GM12878 (cell line): ENCODE measurements at regions of chr17 and their contacts with region 1.

Region 1: DNA sequence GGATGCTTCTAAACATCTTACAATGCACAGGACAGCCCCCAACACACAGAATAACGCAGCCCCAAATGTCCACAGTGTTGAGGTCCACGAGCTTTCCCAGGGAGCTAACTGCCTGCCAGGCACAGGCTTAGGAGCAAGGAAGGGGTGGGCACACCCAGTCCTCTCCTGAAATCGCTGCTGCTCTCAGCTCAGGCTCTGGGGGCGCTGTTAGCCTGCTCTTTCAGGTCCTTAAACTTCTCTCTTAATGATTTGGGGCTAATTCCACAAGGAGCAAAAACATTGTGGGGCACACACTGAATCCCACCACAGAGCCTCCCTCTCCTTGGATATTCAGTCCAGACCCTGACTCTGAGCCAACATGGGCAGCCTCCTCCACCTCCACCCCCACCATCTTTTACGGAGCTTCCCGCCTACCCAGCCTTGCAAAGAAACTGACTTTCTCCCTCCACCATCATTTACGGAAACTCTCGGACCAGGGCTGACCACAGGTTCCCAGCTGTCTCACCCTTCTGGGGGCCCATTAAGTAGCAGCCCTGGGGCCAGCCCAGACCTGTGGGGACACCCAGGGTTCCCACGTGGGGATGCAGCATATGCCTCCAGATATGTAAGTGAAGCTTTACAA is 1.1 kb downstream of the CD300H start:
- DNase-seq: no peak
- ATAC-seq: peak; percentile 86
- H3K4me3 ChIP-seq: no peak overlapping the region
- H3K27ac ChIP-seq: no peak overlapping the region
- H3K4me1 ChIP-seq: no peaks in the 10 kb centered on the region
- H3K27me3 ChIP-seq: peaks cover 1 to 3% of the 10 kb centered on the region in 2 experiments; a peak in 3 of 4 replicates
- CTCF ChIP-seq: peak; percentile 66 to 78 (median 74)
- EP300 ChIP-seq: no peak
- POLR2A ChIP-seq: no peak
- RAD21 ChIP-seq: peak; percentile 71

Region 2: GRCh38 chr17:74513987-74514631 is 52.1 kb before region 1 on chr17:
- CTCF ChIA-PET with region 1: interaction called, 3 read pairs
- POLR2A ChIA-PET with region 1: no interaction called
- RAD21 ChIA-PET with region 1: no interaction called
- SMC1A ChIA-PET with region 1: no interaction called
- in situ Hi-C with region 1: loop called (anchors 10 kb)
- intact Hi-C with region 1: no loop called
- DNase-seq: peak; percentile 73
- ATAC-seq: no peak
- H3K4me3 ChIP-seq: no peak overlapping the region
- H3K27ac ChIP-seq: no peak overlapping the region
- H3K4me1 ChIP-seq: 0 out of 2 replicates have a peak, but pooled peaks cover 7% of the 10 kb centered on the region
- H3K27me3 ChIP-seq: no peaks in the 10 kb centered on the region
- CTCF ChIP-seq: no peak
- EP300 ChIP-seq: no peak; a peak in 2 of 4 replicates
- POLR2A ChIP-seq: no peak
- RAD21 ChIP-seq: no peak

Region 3: DNA sequence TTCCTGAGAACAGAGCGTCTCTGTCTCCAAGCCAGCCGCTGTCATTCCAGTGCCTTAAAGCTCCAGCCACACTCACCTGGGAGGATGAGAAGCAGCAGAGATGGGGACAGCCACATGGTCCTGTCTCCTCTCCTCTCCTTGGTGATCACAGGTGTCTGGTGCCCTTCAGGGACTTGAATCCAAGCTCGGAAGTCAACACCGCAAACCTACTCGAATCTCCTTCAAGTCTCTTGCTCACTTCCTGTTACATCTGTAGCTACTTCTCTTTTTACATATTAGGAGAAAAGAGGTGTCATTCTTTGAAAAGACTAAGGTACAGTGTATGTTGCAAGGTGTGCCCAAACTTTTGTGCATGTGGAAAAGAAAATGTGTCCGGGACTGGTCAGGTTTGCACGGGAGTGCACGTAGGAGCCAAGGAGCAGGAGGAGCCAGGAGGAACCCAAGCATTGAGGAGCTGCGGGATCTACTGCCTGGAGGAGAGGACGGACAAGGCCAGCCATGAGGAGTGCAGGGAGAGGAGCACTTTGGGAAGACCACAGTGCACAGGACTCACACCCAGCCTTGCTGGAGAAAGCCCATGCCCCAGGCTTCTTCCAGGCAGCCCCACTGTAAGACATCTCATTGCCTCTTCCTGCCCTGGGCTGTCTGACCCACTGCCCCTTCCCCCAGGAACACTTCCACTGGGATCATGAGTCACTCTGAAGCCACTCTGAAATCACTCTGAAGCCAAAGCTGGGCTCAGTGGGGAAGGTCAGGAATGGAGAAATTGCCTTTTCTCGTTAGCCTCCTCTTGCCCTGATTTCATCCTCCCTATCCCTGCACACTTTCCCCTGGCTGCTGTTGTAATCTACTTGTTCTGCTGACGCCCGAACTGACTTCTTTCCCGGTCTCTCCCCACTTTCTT is 26.1 kb after region 1 on chr17 and contains the start of gene CD300LD:
- CTCF ChIA-PET with region 1: interaction called, 12 read pairs
- POLR2A ChIA-PET with region 1: no interaction called
- RAD21 ChIA-PET with region 1: no interaction called
- SMC1A ChIA-PET with region 1: no interaction called
- in situ Hi-C with region 1: no loop called
- intact Hi-C with region 1: no loop called
- DNase-seq: no peak
- ATAC-seq: no peak
- H3K4me3 ChIP-seq: no peak within 1 kb of the TSS
- H3K27ac ChIP-seq: no peak within 1 kb of the TSS
- H3K4me1 ChIP-seq: no peaks in the 10 kb centered on the region
- H3K27me3 ChIP-seq: peaks cover 0 to 2% of the 10 kb centered on the region in 2 experiments; a peak in 2 of 4 replicates
- CTCF ChIP-seq: no peak
- EP300 ChIP-seq: no peak
- POLR2A ChIP-seq: no peak
- RAD21 ChIP-seq: no peak
- polyA plus RNA-seq, gene CD300LD: not detected

Region 4: DNA sequence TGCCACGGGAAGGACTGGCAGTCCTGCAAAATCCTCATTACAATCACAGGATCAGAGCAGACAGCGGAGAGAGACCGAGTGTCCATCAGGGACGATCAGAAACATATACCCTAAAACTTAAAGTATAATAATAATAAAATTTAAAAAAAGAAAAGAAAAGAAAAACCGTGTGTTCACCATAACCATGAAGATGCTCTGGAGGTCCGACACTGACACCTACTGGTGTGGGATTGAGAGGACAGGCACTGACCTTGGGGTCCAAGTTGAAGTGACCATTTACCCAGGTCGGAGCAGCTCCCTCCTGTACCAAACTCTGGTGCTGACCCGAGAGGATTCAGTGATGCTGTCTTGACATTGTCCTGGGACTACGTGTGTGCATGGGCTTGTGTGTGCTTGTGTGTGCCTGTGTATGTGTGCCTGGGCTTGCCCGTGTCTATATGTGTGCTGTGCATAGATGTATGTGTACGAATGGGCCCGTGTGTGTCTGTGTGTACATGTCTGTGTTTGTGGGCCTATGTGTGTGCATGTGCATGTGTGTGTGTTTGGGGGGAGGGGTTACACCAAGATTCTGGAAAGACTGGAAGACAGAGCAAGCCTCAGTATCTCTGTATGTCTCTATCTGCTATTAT is 35.8 kb after region 1 on chr17:
- CTCF ChIA-PET with region 1: interaction called, 10 read pairs
- POLR2A ChIA-PET with region 1: no interaction called
- RAD21 ChIA-PET with region 1: interaction called, 5 read pairs
- SMC1A ChIA-PET with region 1: interaction called, 4 read pairs
- in situ Hi-C with region 1: no loop called
- intact Hi-C with region 1: no loop called
- DNase-seq: no peak
- ATAC-seq: peak; percentile 85
- H3K4me3 ChIP-seq: no peak overlapping the region
- H3K27ac ChIP-seq: no peak overlapping the region
- H3K4me1 ChIP-seq: no peaks in the 10 kb centered on the region; the same call in 1 of the 2 replicates
- H3K27me3 ChIP-seq: peaks cover 2 to 4% of the 10 kb centered on the region in 2 experiments; a peak in 3 of 4 replicates
- CTCF ChIP-seq: peak; percentile 67 to 71 (median 70)
- EP300 ChIP-seq: no peak
- POLR2A ChIP-seq: no peak
- RAD21 ChIP-seq: peak; percentile 73

Region 5: DNA sequence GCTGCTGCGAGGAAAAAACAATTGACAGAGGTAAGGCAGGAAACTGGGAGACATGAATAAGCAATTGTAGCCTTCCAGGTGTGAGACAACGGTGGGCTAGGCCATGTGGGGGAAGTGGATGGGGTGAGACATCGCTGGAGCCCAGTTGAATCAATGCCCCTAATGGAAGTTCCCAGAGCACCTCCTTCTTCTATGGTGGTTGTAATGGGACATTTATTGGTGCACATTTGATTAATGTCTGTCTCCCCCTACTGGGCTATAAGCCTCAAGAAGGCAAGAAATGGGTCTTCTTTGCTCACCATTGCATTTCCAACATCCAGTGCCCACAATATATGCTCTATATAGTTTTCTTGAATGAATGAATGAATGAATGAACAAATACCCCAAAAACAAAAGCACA is 80.0 kb after region 1 on chr17:
- CTCF ChIA-PET with region 1: interaction called, 14 read pairs
- POLR2A ChIA-PET with region 1: no interaction called
- RAD21 ChIA-PET with region 1: interaction called, 9 read pairs
- SMC1A ChIA-PET with region 1: interaction called, 5 read pairs
- in situ Hi-C with region 1: no loop called
- intact Hi-C with region 1: loop called (anchors 5 kb)
- DNase-seq: no peak
- ATAC-seq: peak; percentile 59
- H3K4me3 ChIP-seq: no peak overlapping the region
- H3K27ac ChIP-seq: no peak overlapping the region
- H3K4me1 ChIP-seq: peaks cover 10% of the 10 kb centered on the region
- H3K27me3 ChIP-seq: peaks cover 0 to 5% of the 10 kb centered on the region in 2 experiments; a peak in 2 of 4 replicates
- CTCF ChIP-seq: peak; percentile 46 to 68 (median 50); a peak in 5 of 6 replicates
- EP300 ChIP-seq: no peak
- POLR2A ChIP-seq: no peak
- RAD21 ChIP-seq: peak; percentile 64

Region 6: DNA sequence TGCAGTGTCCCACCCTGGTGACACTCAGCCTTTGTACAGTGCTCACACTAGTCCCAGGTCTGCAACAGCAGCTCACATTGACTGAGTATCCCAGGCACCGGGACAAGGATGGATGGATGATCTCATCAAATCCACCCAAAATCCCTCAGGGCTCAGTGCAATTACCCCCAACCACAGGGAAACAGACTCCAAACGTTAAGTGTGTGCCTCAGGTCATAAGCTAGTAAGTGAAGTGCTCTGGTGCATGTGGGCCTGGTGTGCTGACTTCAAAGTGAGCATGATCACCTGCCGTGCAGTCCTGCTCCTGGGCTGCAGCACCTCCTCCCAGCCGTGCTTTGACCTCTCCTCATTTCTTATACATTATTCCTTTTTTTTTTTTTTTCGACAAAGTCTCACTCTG is 88.5 kb after region 1 on chr17:
- CTCF ChIA-PET with region 1: interaction called, 34 read pairs
- POLR2A ChIA-PET with region 1: no interaction called
- RAD21 ChIA-PET with region 1: interaction called, 17 read pairs
- SMC1A ChIA-PET with region 1: interaction called, 4 read pairs
- in situ Hi-C with region 1: no loop called
- intact Hi-C with region 1: loop called (anchors 5 kb)
- DNase-seq: no peak
- ATAC-seq: no peak
- H3K4me3 ChIP-seq: no peak overlapping the region
- H3K27ac ChIP-seq: no peak overlapping the region
- H3K4me1 ChIP-seq: 0 out of 2 replicates have a peak, but pooled peaks cover 2% of the 10 kb centered on the region
- H3K27me3 ChIP-seq: peaks cover 3 to 11% of the 10 kb centered on the region in 2 experiments; a peak in 1 of 4 replicates
- CTCF ChIP-seq: no peak
- EP300 ChIP-seq: no peak
- POLR2A ChIP-seq: no peak
- RAD21 ChIP-seq: no peak